Right lobe of liver (tissue), 6 donors: ENCODE measurements at regions of chr7 and their contacts with region 1.

Region 1: DNA sequence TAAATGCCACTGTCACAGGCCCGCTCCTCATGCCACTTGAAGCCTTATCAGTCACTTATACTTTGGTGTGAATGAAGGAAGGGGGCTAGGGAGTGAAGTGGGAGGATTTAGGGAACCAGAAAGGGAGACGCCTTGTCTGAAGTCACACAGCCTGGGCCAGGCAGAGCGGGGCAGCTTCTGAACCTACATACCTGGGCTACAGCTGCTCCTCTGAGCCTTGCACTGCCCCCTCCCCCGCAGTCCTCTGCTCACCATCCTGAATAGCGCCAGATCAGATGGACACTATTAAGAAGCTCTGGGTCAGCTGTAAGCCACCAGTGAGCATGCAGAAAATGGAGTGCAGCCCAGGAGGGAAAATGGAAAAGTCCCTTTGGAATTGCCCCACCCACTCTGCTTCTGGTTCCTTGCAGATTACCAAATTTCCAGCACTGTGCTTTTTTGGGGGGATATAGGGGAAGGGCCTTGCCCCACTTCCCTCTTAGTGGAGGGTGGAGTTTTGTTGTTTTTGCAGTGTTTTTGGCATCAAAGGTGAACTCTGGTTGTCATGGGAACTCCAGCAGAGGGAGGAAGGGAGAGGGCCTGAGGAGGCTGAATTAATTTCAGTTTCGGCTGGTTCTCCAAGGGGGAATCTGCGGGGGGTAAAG is 35.0 kb upstream of the ADCYAP1R1 start:
- DNase-seq: no peak
- ATAC-seq: no peak
- H3K4me3 ChIP-seq: no peak overlapping the region
- H3K27ac ChIP-seq: no peak overlapping the region
- H3K4me1 ChIP-seq: no peaks in the 10 kb centered on the region
- H3K27me3 ChIP-seq: no peaks in the 10 kb centered on the region
- CTCF ChIP-seq: no peak
- POLR2A ChIP-seq: no peak

Region 2: GRCh38 chr7:31663072-31663471 is 645.9 kb after region 1 on chr7:
- intact Hi-C with region 1: loop called in 1 of 2 experiments (anchors 10 kb)
- DNase-seq: no peak
- ATAC-seq: no peak
- H3K4me3 ChIP-seq: no peak overlapping the region
- H3K27ac ChIP-seq: no peak overlapping the region
- H3K4me1 ChIP-seq: no peaks in the 10 kb centered on the region
- H3K27me3 ChIP-seq: no peaks in the 10 kb centered on the region
- CTCF ChIP-seq: no peak
- POLR2A ChIP-seq: no peak